AG04449 (cell line): ENCODE measurements at regions of chr1 and their contacts with region 1.

Region 1: DNA sequence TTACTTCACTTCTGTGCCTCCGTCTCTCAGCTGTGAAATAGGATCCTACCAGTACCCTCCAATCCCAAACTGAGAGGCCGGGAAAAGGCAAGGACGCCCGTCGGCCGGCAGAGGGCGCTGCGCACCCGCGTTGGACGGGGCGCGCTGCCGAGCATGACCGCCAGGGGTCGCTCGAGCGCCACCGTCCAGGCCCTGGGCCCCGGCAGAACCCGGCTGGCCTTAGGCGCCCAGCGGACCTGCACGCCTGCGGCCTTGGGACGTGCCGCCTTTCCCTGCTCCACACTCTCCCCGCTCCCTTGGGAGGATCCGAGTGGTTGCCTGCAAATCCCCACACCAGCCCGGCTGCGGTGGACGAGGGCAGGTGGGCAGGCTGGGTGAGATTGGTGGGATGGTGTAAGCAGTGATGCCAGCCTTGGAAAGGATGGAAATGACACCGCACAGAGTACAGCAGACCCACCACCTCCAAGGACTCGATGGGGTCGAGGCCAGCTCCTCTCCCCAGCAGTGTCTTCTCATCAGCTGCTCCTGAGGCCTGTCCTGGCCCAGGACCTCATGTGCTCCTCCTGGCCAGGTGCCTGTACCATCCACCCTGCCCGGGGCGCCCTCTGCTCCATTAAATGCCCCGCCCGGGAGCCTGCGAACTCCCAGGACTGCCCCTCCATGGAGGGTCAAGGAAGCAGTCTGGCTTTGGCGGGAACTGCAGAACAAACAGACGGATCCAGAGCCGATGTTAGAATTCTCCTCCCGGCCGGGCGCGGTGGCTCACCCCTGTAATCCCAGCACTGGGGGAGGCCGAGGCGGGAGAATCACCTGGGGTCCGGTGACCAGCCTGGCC is 47.4 kb upstream of the LBR start:
- DNase-seq: no peak
- H3K4me3 ChIP-seq: no peak overlapping the region; the same call in 1 of the 2 replicates
- CTCF ChIP-seq: peak; percentile 100

Region 2: GRCh38 chr1:225242623-225243022 is 232.6 kb before region 1 on chr1:
- CTCF ChIA-PET with region 1: no interaction called
- POLR2A ChIA-PET with region 1: no interaction called
- DNase-seq: no peak
- H3K4me3 ChIP-seq: no peak overlapping the region
- CTCF ChIP-seq: no peak

Region 3: GRCh38 chr1:225441314-225442122 is 33.7 kb before region 1 on chr1:
- CTCF ChIA-PET with region 1: interaction called, 11 read pairs
- POLR2A ChIA-PET with region 1: no interaction called
- DNase-seq: no peak
- H3K4me3 ChIP-seq: no peak overlapping the region
- CTCF ChIP-seq: peak; percentile 5

Region 4: GRCh38 chr1:225834417-225835329 is 359.5 kb after region 1 on chr1:
- CTCF ChIA-PET with region 1: interaction called, 105 read pairs
- POLR2A ChIA-PET with region 1: no interaction called
- DNase-seq: peak; percentile 9
- H3K4me3 ChIP-seq: no peak overlapping the region
- CTCF ChIP-seq: no peak

Region 5: GRCh38 chr1:225866061-225866837 is 391.0 kb after region 1 on chr1:
- CTCF ChIA-PET with region 1: interaction called, 13 read pairs
- POLR2A ChIA-PET with region 1: no interaction called
- DNase-seq: no peak
- H3K4me3 ChIP-seq: no peak overlapping the region
- CTCF ChIP-seq: no peak

Region 6: GRCh38 chr1:225911191-225912130 is 436.3 kb after region 1 on chr1:
- CTCF ChIA-PET with region 1: interaction called, 190 read pairs
- POLR2A ChIA-PET with region 1: no interaction called
- DNase-seq: no peak
- H3K4me3 ChIP-seq: no peak overlapping the region; the same call in 1 of the 2 replicates
- CTCF ChIP-seq: peak; percentile 77

Region 7: DNA sequence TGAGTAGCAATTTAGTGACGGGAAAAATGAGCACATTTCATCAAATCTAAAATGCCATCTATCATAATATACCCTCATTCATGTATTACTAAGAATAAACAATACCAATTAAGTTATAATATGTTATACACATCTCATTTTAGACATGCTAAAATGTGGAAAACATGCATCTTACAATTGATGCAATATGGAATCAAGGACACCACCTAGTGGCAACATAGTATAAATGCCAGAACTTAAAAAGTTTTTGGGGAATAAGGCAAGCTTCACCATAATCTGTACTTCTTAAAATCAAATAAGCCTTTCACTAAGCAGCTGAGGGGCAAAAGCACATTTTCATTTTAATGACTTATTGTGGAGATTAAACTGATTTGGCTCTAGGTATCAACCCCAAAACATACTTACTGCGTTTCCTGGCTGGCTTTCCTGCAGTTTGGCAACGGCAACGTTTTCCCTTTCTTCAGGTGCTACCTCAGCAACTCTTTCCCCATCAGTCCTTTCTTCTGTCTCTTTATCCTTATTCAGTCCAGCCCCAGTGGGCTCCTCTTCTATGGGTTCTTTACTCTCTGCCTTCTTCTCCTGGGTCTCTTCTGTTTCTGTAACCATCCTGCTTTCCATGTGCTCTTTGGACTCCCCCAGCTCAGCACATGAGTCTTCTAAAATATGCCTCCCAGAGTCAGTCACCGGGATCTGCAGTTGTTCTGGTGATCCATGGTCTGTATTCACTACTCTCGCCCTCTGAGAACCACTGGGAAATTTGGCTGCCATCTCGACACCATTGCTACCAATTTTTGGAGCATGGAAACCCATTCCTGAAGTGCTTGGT is 512.5 kb after region 1 on chr1:
- CTCF ChIA-PET with region 1: interaction called, 160 read pairs
- POLR2A ChIA-PET with region 1: no interaction called
- DNase-seq: no peak
- H3K4me3 ChIP-seq: no peak overlapping the region
- CTCF ChIP-seq: peak; percentile 39